MCF 10A (cell line): ENCODE measurements at regions of chr2 and their contacts with region 1.

Region 1: GRCh38 chr2:48946449-48947048 is 191.0 kb upstream of the LHCGR start:
- DNase-seq: peak; percentile 74
- H3K4me3 Mint-ChIP-seq: no peak overlapping the region
- H3K27ac Mint-ChIP-seq: no peak overlapping the region
- H3K4me1 Mint-ChIP-seq: no peaks in the 10 kb centered on the region
- H3K27me3 Mint-ChIP-seq: no peaks in the 10 kb centered on the region
- CTCF ChIP-seq: peak; percentile 82

Region 2: DNA sequence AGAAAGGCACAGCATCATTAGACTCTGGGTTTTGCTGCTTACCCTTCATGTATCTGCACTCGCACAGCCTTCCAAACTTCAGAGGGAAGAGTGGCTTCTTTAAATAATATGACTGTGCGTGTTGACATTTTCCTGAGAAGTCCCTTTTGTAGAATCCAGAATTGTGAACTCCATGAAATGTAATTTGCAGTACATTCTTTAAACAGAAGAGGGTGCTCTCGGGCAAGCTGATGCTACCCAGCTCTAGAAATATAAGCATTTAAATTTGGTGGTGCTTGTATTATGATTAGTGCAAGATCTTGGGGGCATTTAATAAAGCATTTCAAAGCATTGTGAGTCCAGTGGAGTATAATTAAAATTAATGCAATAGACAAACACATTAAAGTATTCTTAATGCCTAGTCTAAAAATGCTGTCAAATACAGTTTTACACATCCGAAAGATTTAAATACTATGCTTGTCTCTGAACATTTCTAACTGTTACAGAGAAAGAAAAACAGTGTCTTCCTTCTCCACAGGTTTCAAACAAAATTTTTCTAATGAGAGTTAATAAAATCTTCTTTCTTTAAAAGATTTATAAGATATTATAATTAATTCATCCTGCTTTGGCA is 346.2 kb before region 1 on chr2:
- CTCF ChIA-PET with region 1: interaction called, 4 read pairs
- POLR2A ChIA-PET with region 1: no interaction called
- intact Hi-C with region 1: loop called (anchors 1 kb)
- DNase-seq: peak; percentile 57
- H3K4me3 Mint-ChIP-seq: no peak overlapping the region
- H3K27ac Mint-ChIP-seq: no peak overlapping the region
- H3K4me1 Mint-ChIP-seq: no peaks in the 10 kb centered on the region
- H3K27me3 Mint-ChIP-seq: no peaks in the 10 kb centered on the region
- CTCF ChIP-seq: peak; percentile 79

Region 3: DNA sequence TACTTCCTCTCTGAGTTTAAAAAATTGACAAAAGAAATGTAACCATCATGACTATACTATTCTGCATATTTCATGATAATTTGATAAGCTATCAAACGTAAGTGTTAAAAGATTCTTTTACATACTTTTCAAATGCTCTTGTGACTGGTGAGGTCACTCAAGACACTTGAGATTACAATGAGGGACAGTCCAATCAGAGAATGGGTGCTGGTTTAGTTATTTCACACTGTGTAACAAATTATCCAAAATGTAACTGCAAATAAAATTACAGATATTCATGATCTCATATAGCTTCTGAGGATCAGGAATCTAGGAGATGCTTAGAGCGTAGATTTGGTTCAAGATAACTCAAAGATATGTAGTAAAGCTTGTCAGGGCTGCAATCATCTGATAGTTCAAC is 333.3 kb before region 1 on chr2:
- CTCF ChIA-PET with region 1: no interaction called
- POLR2A ChIA-PET with region 1: no interaction called
- intact Hi-C with region 1: no loop called
- DNase-seq: no peak
- H3K4me3 Mint-ChIP-seq: no peak overlapping the region
- H3K27ac Mint-ChIP-seq: no peak overlapping the region
- H3K4me1 Mint-ChIP-seq: no peaks in the 10 kb centered on the region
- H3K27me3 Mint-ChIP-seq: no peaks in the 10 kb centered on the region
- CTCF ChIP-seq: no peak

Region 4: DNA sequence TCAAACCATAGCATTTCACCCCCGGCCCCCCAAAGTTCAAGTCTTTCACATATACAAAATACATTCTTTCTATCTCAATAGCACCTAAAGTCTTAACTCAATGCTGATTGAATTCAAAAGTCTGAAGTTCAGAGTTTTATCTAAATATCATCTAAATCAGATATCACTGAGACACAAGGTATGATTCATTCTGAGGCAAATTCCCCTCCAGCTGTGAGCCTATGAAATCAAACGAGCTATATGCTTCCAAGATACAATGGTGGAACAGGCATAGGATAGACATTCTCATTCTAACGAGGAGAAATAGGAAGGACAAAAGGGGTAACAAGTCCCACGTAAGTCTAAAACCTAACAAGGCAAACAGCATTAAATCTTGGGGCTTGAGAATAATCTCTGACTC is 25.6 kb before region 1 on chr2:
- CTCF ChIA-PET with region 1: no interaction called
- POLR2A ChIA-PET with region 1: no interaction called
- intact Hi-C with region 1: no loop called
- DNase-seq: no peak
- H3K4me3 Mint-ChIP-seq: no peak overlapping the region
- H3K27ac Mint-ChIP-seq: no peak overlapping the region
- H3K4me1 Mint-ChIP-seq: no peaks in the 10 kb centered on the region
- H3K27me3 Mint-ChIP-seq: no peaks in the 10 kb centered on the region
- CTCF ChIP-seq: no peak

Region 5: DNA sequence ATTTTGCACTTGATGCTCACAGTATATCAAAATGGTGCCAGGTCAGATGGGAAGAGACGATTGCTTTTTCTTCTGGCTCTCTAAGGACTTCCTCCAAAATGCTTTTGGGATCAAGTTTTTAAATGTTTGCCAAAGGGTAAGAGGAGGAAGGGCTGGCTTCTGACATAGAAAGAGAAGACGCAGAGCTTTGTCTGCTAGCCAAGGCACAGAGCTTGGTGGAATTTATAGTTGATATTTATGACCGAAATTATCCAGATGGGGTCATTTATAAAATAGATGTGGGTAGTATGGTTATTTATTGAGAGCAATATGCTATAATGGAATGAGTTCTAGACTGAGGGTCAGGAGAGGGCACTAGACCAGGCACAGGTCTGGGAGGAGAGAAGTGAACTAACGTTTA is 14.5 kb after region 1 on chr2:
- CTCF ChIA-PET with region 1: interaction called, 23 read pairs
- POLR2A ChIA-PET with region 1: no interaction called
- intact Hi-C with region 1: no loop called
- DNase-seq: no peak
- H3K4me3 Mint-ChIP-seq: no peak overlapping the region
- H3K27ac Mint-ChIP-seq: no peak overlapping the region
- H3K4me1 Mint-ChIP-seq: no peaks in the 10 kb centered on the region
- H3K27me3 Mint-ChIP-seq: peaks cover 18% of the 10 kb centered on the region
- CTCF ChIP-seq: no peak

Region 6: GRCh38 chr2:49616800-49617199 is 670.3 kb after region 1 on chr2:
- CTCF ChIA-PET with region 1: interaction called, 3 read pairs
- POLR2A ChIA-PET with region 1: no interaction called
- intact Hi-C with region 1: loop called (anchors 2 kb)
- DNase-seq: peak; percentile 56
- H3K4me3 Mint-ChIP-seq: no peak overlapping the region
- H3K27ac Mint-ChIP-seq: no peak overlapping the region
- H3K4me1 Mint-ChIP-seq: no peaks in the 10 kb centered on the region
- H3K27me3 Mint-ChIP-seq: peaks cover 13% of the 10 kb centered on the region
- CTCF ChIP-seq: peak; percentile 49

Region 7: DNA sequence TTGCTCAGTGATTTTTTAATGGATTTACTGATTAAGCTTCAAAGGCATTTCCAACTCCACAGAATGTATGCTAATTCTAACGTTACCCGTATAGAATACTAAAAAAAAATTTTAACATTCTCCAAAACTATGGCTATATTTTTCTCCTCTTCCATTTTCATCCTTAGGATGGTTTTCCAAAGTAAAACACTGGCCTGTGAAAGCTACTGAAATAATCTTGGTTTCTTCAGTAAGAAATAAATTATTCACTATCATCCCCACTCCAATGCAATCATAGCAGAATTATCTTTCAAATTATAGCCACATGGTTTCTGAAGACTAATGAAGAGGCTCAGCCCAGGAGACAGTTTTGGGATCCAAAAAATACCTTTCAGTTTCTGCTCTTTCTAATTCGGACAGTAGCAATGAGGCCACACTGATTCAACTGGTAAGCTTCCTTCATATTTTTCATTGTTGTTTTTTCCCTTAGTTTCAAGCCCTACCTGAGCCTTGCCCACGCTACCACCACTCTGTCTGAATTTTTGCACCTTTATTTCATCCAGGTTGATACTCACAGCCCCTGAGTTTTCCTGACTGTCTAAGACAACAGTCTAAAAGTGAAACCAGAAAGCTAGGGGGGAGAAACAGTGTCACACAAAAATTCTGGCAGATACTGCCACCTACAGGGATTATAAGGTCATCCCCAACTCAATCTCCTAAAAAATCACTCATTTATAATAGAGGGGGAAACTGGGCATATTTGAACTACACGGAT is 1197.5 kb after region 1 on chr2:
- CTCF ChIA-PET with region 1: interaction called, 5 read pairs
- POLR2A ChIA-PET with region 1: no interaction called
- intact Hi-C with region 1: loop called (anchors 1 kb)
- DNase-seq: peak; percentile 63
- H3K4me3 Mint-ChIP-seq: peak overlapping the region; percentile 69
- H3K27ac Mint-ChIP-seq: peak overlapping the region; percentile 68
- H3K4me1 Mint-ChIP-seq: peaks cover 18% of the 10 kb centered on the region
- H3K27me3 Mint-ChIP-seq: peaks cover 15% of the 10 kb centered on the region
- CTCF ChIP-seq: peak; percentile 51